ENCODE measurements at regions of chr5 and their contacts with region 1.

Region 1: GRCh38 chr5:36507332-36507952 is 99.0 kb upstream of the SLC1A3 start:
- DNase-seq: peak; percentile 76 to 83
- H3K4me3 ChIP-seq: no peak overlapping the region
- H3K4me3 Mint-ChIP-seq: no peak overlapping the region
- H3K27ac Mint-ChIP-seq: no peak overlapping the region
- H3K4me1 ChIP-seq: peaks cover 14% of the 10 kb centered on the region; the same call in 1 of the 2 replicates
- H3K4me1 Mint-ChIP-seq: no peaks in the 10 kb centered on the region
- H3K27me3 ChIP-seq: no peaks in the 10 kb centered on the region
- H3K27me3 Mint-ChIP-seq: no peaks in the 10 kb centered on the region
- CTCF ChIP-seq: peak; percentile 78 to 88

Region 2: DNA sequence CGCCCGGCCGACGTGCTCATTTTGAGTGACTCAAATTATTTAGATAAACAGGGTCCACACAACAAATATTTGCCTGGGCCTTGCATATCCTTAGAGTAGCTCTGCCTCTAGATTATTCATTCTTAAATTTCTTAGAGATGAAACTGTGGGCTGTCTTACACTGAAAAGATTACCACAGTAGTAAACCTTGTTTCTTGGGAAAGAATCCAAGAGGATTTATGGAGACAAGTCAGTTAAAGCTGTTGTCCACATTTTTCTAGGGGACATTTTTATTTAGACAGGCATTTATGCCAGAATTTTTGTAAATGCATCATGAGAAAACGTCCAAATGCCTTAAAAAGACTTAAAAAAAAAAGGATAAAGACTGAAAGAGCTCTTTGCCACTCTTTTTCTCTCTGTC is 173.1 kb before region 1 on chr5:
- CTCF ChIA-PET with region 1: no interaction called
- POLR2A ChIA-PET with region 1: no interaction called
- intact Hi-C with region 1: no loop called
- DNase-seq: no peak
- H3K4me3 ChIP-seq: no peak overlapping the region
- H3K4me3 Mint-ChIP-seq: no peak overlapping the region
- H3K27ac Mint-ChIP-seq: no peak overlapping the region
- H3K4me1 ChIP-seq: no peaks in the 10 kb centered on the region
- H3K4me1 Mint-ChIP-seq: no peaks in the 10 kb centered on the region
- H3K27me3 ChIP-seq: no peaks in the 10 kb centered on the region
- H3K27me3 Mint-ChIP-seq: no peaks in the 10 kb centered on the region
- CTCF ChIP-seq: no peak

Region 3: DNA sequence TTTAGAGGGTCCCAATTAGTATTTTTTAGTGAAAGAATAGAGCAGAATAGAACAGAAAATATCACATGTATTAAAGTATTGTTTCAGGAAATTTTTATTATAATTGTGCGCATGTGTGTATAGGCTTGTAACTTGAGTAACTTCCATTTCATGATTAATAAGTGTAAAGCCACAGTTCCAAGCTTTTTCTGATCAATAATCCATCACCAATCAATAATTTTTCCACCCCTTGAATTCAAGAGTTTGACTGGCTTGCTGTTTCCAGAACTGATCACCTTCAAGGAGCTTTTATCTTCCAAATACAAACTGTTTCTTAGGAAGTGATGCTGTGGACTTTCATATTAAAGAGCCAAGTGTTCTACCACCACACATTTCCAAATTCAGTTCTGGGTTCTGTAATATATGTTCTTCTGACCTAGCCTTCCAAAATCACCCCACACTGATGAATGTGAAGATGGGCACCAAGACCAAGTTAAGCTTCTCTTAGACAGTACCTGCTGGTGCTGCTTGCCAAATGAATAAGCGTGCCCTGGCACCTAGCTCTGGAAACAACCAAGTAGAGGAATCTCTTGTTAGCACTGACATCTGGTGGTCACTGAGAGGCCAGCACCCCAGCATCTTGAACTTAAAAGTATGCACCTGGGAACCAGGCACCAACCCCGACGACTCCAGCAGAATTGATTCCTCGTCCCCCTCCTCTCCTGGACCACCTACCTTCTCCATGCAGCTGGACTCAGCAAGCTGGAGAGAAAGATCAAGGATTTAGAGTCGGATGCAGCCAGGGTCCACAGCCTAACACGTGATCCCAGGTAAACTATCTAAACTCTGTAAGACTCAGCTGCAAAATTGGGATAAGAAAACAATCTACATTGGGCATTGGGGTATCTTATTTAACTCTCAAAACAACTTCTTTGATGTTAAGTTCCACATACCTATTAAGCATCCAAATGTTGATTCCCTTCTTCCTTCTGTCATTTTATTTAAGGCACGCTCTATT is 188.5 kb after region 1 on chr5:
- CTCF ChIA-PET with region 1: interaction called, 3 read pairs
- POLR2A ChIA-PET with region 1: no interaction called
- intact Hi-C with region 1: loop called (anchors 1 kb)
- DNase-seq: peak; percentile 71 to 76
- H3K4me3 ChIP-seq: no peak overlapping the region
- H3K4me3 Mint-ChIP-seq: no peak overlapping the region
- H3K27ac Mint-ChIP-seq: no peak overlapping the region
- H3K4me1 ChIP-seq: peaks cover 24% of the 10 kb centered on the region
- H3K4me1 Mint-ChIP-seq: peaks cover 41% of the 10 kb centered on the region
- H3K27me3 ChIP-seq: no peaks in the 10 kb centered on the region
- H3K27me3 Mint-ChIP-seq: no peaks in the 10 kb centered on the region
- CTCF ChIP-seq: peak; percentile 84 to 92